ENCODE measurements at regions of chr15 and their contacts with region 1.

Region 1: GRCh38 chr15:47987908-47988532 is 132.8 kb upstream of the SLC24A5 start:
- DNase-seq: peak in 1 of 2 donors; percentile 47
- ATAC-seq: peak; percentile 83 to 96 (median 89)
- H3K4me3 ChIP-seq: no peak overlapping the region
- H3K27ac ChIP-seq: no peak overlapping the region
- H3K4me1 ChIP-seq: no peaks in the 10 kb centered on the region
- H3K27me3 ChIP-seq: no peaks in the 10 kb centered on the region
- CTCF ChIP-seq: peak; percentile 59 to 86 (median 74)

Region 2: GRCh38 chr15:47374222-47374621 is 613.8 kb before region 1 on chr15:
- intact Hi-C with region 1: loop called in 1 of 10 experiments (anchors 10 kb)
- DNase-seq: no peak
- ATAC-seq: peak in 1 of 8 donors; percentile 33
- H3K4me3 ChIP-seq: no peak overlapping the region
- H3K27ac ChIP-seq: no peak overlapping the region
- H3K4me1 ChIP-seq: no peaks in the 10 kb centered on the region
- H3K27me3 ChIP-seq: no peaks in the 10 kb centered on the region
- CTCF ChIP-seq: peak in 7 of 9 donors; percentile 22 to 45 (median 27)

Region 3: GRCh38 chr15:47496343-47497171 is 491.5 kb before region 1 on chr15:
- intact Hi-C with region 1: loop called in 9 of 10 experiments (anchors 1 to 10 kb)
- DNase-seq: no peak
- ATAC-seq: no peak
- H3K4me3 ChIP-seq: no peak overlapping the region
- H3K27ac ChIP-seq: no peak overlapping the region
- H3K4me1 ChIP-seq: no peaks in the 10 kb centered on the region
- H3K27me3 ChIP-seq: peaks cover 0 to 11% (median 0%) of the 10 kb centered on the region in 7 donors
- CTCF ChIP-seq: no peak

Region 4: DNA sequence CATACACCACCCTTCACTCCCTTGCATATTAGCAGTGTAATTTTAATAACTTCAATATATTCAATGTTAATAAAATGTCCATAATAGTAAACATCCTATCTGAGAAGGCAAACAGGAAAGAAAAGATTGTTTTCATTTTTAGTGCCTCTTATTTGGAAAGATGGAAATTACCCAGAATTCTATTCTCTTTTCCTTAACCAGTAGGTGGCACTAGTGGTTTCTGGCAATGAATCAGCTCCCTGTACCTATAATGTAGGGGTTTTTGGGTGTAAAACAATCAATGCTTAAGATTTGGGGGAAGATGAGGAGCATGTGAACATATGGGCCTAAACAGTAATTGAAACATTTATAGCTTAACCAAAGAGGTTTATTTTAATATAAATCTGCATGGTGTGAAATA is 276.4 kb before region 1 on chr15:
- intact Hi-C with region 1: loop called in 9 of 10 experiments (anchors 2 to 10 kb)
- DNase-seq: no peak
- ATAC-seq: no peak
- H3K4me3 ChIP-seq: no peak overlapping the region
- H3K27ac ChIP-seq: no peak overlapping the region
- H3K4me1 ChIP-seq: peaks cover 0 to 14% (median 9%) of the 10 kb centered on the region in 9 donors
- H3K27me3 ChIP-seq: peaks cover 0 to 25% (median 0%) of the 10 kb centered on the region in 7 donors
- CTCF ChIP-seq: peak; percentile 22 to 70 (median 54)

Region 5: DNA sequence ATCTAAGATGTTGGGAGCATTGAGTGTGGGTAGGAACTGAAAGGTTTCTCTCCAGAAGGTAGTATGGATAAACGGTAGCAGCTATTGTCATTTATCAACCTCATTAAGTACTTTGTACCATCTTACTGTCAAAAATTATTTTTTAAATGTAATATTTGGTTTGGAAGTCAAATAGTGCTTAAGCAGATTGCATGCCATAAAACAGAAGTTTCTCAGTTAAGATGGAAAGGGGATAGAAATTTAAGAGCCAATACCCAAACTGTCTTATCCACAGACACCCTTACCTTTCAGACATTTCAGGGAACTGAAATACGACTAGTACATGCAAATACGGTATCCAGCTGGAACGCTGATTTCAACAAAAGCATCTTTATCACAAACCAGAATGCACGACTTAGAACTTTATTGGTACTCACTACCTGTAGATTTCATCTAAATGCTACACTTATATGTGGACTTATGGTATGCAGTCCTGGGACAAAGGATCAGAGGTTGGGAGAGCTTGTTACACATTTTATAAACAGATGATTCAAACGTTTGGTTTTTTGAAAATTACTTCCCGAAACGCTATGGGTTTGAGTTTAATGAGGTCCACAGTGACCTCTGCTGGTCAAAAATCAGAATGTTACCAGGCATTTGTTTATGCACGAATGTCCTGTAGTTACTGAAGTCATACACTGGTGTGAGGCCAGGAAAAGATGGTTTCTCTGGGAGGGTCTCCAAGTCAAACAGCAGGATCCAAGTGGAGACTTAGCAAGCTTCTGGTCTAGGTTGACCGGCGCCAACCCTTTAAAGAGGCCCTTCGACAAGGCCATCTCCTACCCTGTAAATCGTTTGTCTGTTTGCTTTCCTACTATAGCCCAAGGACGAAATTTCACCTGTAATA is 297.6 kb after region 1 on chr15:
- intact Hi-C with region 1: loop called in 1 of 10 experiments (anchors 10 kb)
- DNase-seq: peak in 1 of 2 donors; percentile 61
- ATAC-seq: peak in 7 of 8 donors; percentile 70 to 82 (median 78)
- H3K4me3 ChIP-seq: peak overlapping the region in 6 of 10 donors; percentile 9 to 35 (median 28)
- H3K27ac ChIP-seq: no peak overlapping the region
- H3K4me1 ChIP-seq: peaks cover 0 to 30% (median 5%) of the 10 kb centered on the region in 9 donors
- H3K27me3 ChIP-seq: no peaks in the 10 kb centered on the region
- CTCF ChIP-seq: peak; percentile 56 to 82 (median 72)

Region 6: DNA sequence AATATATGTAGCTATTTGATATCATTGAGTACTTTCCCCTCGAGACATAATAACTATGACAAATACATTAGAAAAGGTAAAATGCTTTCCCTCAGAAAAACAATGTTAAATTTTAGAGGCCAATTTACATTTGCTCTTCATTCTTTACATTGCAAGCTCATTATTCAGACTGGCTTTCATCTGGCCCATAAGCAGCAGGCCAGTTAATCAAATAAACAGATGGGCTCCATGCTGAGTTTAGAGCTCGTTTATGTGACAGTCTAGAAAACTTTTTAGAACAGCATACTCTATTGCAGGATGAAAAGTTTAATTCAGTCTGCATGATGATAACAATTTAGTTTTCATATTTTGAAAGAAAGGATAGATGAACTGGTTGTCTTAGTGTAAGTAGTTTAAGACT is 493.8 kb after region 1 on chr15:
- intact Hi-C with region 1: no loop called
- DNase-seq: no peak
- ATAC-seq: no peak
- H3K4me3 ChIP-seq: no peak overlapping the region
- H3K27ac ChIP-seq: no peak overlapping the region
- H3K4me1 ChIP-seq: peaks cover 0 to 14% (median 0%) of the 10 kb centered on the region in 9 donors
- H3K27me3 ChIP-seq: no peaks in the 10 kb centered on the region
- CTCF ChIP-seq: no peak

Measured in heart right ventricle (tissue), 16 donors.